ENCODE measurements at regions of chr13 and their contacts with region 1.

Region 1: DNA sequence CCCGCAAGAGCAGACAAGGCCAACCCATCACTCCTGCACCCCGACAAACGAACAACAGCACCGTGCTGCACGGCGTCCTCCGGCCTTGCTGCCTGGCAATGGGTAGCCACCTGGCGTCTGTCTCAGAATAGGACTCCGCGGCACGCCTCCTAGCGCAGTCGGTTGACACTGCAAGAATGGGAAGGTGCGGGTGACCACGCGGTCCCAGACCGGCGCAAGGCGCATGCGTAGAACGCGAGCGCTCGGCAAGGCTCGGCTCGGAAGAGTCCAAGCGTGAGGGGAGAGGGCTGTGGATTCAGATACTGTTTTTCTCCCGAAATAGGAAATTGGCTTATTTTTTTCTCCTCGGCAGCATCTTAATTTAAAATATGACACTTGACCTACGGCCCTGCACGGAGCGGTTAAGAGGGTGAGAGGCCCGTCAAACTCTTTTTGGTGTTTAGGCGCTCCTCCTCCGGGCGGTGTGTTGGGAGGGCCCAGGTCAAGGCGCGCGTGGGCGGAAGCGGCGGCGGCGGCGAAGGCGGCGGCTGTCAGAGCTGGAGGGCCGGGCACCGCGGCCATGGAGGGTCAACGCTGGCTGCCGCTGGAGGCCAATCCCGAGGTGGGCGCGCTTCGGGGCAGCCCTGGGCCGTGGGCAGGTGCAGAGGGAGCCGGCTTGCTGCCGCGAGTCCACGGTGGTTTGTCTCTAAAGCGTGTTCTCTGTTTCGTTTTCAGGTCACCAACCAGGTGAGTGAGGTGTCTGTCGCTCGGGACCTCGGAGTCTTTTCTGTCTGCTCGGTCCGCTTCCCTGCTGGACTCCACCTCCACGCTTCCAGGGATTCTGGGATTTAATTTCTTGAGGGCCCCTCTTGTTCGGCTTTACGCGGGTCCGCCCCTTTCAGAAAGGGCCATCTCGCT is at the start of gene UCHL3:
- DNase-seq: peak; percentile 92 to 99 (median 96)
- ATAC-seq: peak; percentile 90 to 95 (median 92)
- H3K4me3 ChIP-seq: peak within 1 kb of the TSS; percentile 74 to 96
- H3K4me3 Mint-ChIP-seq: peak within 1 kb of the TSS; percentile 87 to 93 (median 91)
- H3K27ac ChIP-seq: peak within 1 kb of the TSS; percentile 94
- H3K27ac Mint-ChIP-seq: peak within 1 kb of the TSS; percentile 97 to 98
- H3K4me1 ChIP-seq: peaks cover 14 to 18% of the 10 kb centered on the region in 2 experiments
- H3K4me1 Mint-ChIP-seq: peaks cover 42 to 46% (median 44%) of the 10 kb centered on the region in 3 donors
- H3K27me3 ChIP-seq: no peaks in the 10 kb centered on the region
- H3K27me3 Mint-ChIP-seq: no peaks in the 10 kb centered on the region
- total RNA-seq, gene UCHL3: 13.9 to 26.5 (median 16.0) TPM

Region 2: GRCh38 chr13:75537401-75538365 is 11.8 kb before region 1 on chr13 and contains the start of gene COMMD6:
- CTCF ChIA-PET with region 1: interaction called, 3 to 11 read pairs
- POLR2A ChIA-PET with region 1: interaction called in 1 of 2 experiments, 13 read pairs
- DNase-seq: peak; percentile 27 to 79 (median 55)
- ATAC-seq: peak; percentile 92 to 93 (median 93)
- H3K4me3 ChIP-seq: peak within 1 kb of the TSS; percentile 75 to 98
- H3K4me3 Mint-ChIP-seq: peak within 1 kb of the TSS; percentile 96 to 99 (median 97)
- H3K27ac ChIP-seq: peak within 1 kb of the TSS; percentile 57
- H3K27ac Mint-ChIP-seq: peak within 1 kb of the TSS; percentile 93 to 96
- H3K4me1 ChIP-seq: peaks cover 17 to 18% of the 10 kb centered on the region in 2 experiments
- H3K4me1 Mint-ChIP-seq: peaks cover 43 to 54% (median 47%) of the 10 kb centered on the region in 3 donors
- H3K27me3 ChIP-seq: no peaks in the 10 kb centered on the region
- H3K27me3 Mint-ChIP-seq: no peaks in the 10 kb centered on the region
- total RNA-seq, gene COMMD6: 165 to 218 (median 191) TPM

Region 3: DNA sequence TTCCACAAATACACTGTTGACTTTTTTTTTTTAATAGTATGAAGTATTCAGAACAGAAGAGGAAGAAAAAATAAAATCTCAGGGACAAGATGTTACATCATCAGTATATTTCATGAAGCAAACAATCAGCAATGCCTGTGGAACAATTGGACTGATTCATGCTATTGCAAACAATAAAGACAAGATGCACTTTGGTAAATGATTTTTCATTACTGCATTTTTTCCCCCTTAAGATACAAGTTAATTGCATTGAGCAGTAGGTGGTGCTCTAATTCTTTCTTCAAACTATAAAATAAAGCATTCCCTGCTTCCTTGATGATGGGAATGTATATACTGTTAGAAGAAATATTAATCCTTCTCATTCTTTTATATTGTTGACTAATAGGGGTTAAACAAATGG is 17.1 kb after region 1 on chr13:
- CTCF ChIA-PET with region 1: interaction called in 1 of 2 experiments, 10 read pairs
- POLR2A ChIA-PET with region 1: interaction called in 1 of 2 experiments, 4 read pairs
- DNase-seq: no peak
- ATAC-seq: no peak
- H3K4me3 ChIP-seq: no peak overlapping the region
- H3K4me3 Mint-ChIP-seq: no peak overlapping the region
- H3K27ac ChIP-seq: no peak overlapping the region
- H3K27ac Mint-ChIP-seq: no peak overlapping the region
- H3K4me1 ChIP-seq: no peaks in the 10 kb centered on the region
- H3K4me1 Mint-ChIP-seq: peaks cover 0 to 2% (median 0%) of the 10 kb centered on the region in 3 donors
- H3K27me3 ChIP-seq: no peaks in the 10 kb centered on the region
- H3K27me3 Mint-ChIP-seq: no peaks in the 10 kb centered on the region

Region 4: DNA sequence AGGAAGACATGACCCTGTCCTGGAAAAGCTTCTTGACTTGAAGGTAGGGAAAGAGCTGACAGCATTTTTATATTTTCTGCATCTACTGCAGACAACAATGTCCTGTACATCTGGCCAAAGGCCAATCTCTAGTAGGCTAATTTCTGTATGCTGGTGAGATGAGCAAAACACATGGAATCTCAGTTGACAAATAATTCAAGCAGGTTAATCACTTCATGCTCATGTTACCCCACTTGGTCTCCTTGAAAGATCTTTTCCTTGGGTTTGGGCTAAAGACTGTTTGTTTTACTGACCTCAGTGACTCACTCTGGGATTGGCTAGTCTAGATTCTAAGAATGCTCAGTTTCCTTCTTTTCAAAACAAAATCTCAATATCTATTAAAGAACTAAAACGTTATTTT is 385.4 kb after region 1 on chr13:
- CTCF ChIA-PET with region 1: no interaction called
- POLR2A ChIA-PET with region 1: no interaction called
- DNase-seq: no peak
- ATAC-seq: no peak
- H3K4me3 ChIP-seq: no peak overlapping the region
- H3K4me3 Mint-ChIP-seq: no peak overlapping the region
- H3K27ac ChIP-seq: no peak overlapping the region
- H3K27ac Mint-ChIP-seq: no peak overlapping the region
- H3K4me1 ChIP-seq: no peaks in the 10 kb centered on the region
- H3K4me1 Mint-ChIP-seq: no peaks in the 10 kb centered on the region
- H3K27me3 ChIP-seq: no peaks in the 10 kb centered on the region
- H3K27me3 Mint-ChIP-seq: peaks cover 3 to 10% of the 10 kb centered on the region in 2 donors

Measured in T-cell (primary cell).